Activated B cell treated with CpG ODN at 0.5 μM for 24 hours (primary cell): ENCODE measurements at regions of chr13 and their contacts with region 1.

Region 1: DNA sequence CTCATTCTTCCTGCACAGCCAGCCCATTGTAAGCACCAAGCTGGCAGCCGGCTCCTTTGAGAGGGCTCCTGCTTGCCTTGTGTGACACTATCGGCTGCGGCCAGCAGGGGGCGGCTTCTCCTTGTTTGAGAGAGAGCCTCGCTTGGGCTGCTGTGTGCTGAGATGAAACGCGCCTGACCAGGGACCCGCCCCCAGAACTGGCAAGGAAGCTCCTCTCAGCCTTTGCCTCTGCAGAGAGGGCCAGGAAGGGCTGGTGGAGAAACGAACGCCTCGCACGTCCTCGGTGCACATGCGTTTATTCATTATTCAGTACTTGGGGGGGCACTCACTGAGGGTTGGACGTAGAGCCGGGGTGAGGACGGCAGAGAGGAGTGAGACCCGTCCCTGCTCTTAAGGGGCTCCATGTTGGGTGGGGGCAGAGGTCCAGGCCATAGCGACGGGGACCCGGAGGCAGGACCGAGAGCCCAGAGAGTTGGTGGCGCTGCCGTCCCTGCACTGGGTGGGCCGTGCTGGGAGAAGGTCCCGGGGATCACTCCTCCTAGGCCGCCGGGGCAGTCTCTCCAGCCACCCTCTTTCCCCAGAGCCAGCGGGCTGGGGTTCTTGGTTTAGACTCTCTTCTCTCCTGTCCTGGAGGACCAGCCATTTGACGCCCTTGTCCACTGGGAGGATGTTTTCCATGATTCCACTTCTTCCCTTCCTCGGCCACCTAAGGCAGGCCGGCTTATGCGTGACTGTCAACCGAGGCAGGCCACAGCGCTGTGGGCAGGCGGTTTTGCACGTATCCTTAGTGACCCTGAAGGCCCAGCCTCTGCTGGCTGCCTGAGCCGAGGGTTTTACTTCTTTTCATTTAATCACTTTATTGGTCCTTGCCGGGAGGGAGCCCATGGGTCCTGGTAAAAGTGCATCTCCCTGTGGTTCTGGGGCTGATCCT is 174.5 kb downstream of the KATNAL1 start:
- DNase-seq: peak; percentile 90
- ATAC-seq: peak; percentile 100
- H3K4me3 Mint-ChIP-seq: no peak overlapping the region
- H3K27ac Mint-ChIP-seq: no peak overlapping the region
- H3K4me1 Mint-ChIP-seq: peaks cover 3% of the 10 kb centered on the region
- H3K27me3 Mint-ChIP-seq: no peaks in the 10 kb centered on the region
- CTCF ChIP-seq: peak; percentile 69

Region 2: GRCh38 chr13:30234619-30235162 is 101.8 kb after region 1 on chr13:
- CTCF ChIA-PET with region 1: no interaction called
- POLR2A ChIA-PET with region 1: no interaction called
- intact Hi-C with region 1: loop called (anchors 5 kb)
- DNase-seq: no peak
- ATAC-seq: no peak
- H3K4me3 Mint-ChIP-seq: no peak overlapping the region
- H3K27ac Mint-ChIP-seq: no peak overlapping the region
- H3K4me1 Mint-ChIP-seq: no peaks in the 10 kb centered on the region
- H3K27me3 Mint-ChIP-seq: no peaks in the 10 kb centered on the region
- CTCF ChIP-seq: no peak

Region 3: GRCh38 chr13:30371649-30372265 is 238.9 kb after region 1 on chr13:
- CTCF ChIA-PET with region 1: interaction called, 14 read pairs
- POLR2A ChIA-PET with region 1: interaction called, 4 read pairs
- intact Hi-C with region 1: loop called (anchors 1 kb)
- DNase-seq: peak; percentile 68
- ATAC-seq: peak; percentile 78
- H3K4me3 Mint-ChIP-seq: peak overlapping the region; percentile 78
- H3K27ac Mint-ChIP-seq: peak overlapping the region; percentile 84
- H3K4me1 Mint-ChIP-seq: peaks cover 85% of the 10 kb centered on the region
- H3K27me3 Mint-ChIP-seq: no peaks in the 10 kb centered on the region
- CTCF ChIP-seq: no peak

Region 4: DNA sequence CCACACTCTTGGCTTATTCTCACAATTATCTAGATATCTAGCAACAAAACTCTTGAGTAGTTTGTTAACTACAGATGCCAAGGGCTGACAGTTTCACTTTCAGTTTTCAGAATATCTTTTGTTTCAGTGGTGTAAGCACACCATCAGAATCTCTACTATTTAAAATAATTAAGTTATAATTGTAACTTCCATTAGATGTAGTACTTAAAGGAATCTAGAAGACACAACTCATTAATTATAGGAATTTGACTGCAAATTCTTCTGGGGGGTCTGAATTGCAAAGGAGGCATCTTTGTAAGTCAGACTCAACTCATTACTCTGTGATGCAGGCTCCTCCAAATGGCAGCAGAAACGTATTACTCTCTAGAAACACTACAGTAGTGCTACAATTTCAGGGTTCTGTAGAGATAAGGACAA is 440.0 kb after region 1 on chr13:
- CTCF ChIA-PET with region 1: interaction called, 7 read pairs
- POLR2A ChIA-PET with region 1: no interaction called
- intact Hi-C with region 1: loop called (anchors 2 kb)
- DNase-seq: no peak
- ATAC-seq: peak; percentile 83
- H3K4me3 Mint-ChIP-seq: peak overlapping the region; percentile 64
- H3K27ac Mint-ChIP-seq: peak overlapping the region; percentile 71
- H3K4me1 Mint-ChIP-seq: peaks cover 23% of the 10 kb centered on the region
- H3K27me3 Mint-ChIP-seq: no peaks in the 10 kb centered on the region
- CTCF ChIP-seq: no peak

Region 5: GRCh38 chr13:30679483-30680330 is 546.8 kb after region 1 on chr13:
- CTCF ChIA-PET with region 1: no interaction called
- POLR2A ChIA-PET with region 1: no interaction called
- intact Hi-C with region 1: loop called (anchors 1 kb)
- DNase-seq: no peak
- ATAC-seq: peak; percentile 96
- H3K4me3 Mint-ChIP-seq: no peak overlapping the region
- H3K27ac Mint-ChIP-seq: peak overlapping the region; percentile 20
- H3K4me1 Mint-ChIP-seq: peaks cover 15% of the 10 kb centered on the region
- H3K27me3 Mint-ChIP-seq: no peaks in the 10 kb centered on the region
- CTCF ChIP-seq: no peak

Region 6: DNA sequence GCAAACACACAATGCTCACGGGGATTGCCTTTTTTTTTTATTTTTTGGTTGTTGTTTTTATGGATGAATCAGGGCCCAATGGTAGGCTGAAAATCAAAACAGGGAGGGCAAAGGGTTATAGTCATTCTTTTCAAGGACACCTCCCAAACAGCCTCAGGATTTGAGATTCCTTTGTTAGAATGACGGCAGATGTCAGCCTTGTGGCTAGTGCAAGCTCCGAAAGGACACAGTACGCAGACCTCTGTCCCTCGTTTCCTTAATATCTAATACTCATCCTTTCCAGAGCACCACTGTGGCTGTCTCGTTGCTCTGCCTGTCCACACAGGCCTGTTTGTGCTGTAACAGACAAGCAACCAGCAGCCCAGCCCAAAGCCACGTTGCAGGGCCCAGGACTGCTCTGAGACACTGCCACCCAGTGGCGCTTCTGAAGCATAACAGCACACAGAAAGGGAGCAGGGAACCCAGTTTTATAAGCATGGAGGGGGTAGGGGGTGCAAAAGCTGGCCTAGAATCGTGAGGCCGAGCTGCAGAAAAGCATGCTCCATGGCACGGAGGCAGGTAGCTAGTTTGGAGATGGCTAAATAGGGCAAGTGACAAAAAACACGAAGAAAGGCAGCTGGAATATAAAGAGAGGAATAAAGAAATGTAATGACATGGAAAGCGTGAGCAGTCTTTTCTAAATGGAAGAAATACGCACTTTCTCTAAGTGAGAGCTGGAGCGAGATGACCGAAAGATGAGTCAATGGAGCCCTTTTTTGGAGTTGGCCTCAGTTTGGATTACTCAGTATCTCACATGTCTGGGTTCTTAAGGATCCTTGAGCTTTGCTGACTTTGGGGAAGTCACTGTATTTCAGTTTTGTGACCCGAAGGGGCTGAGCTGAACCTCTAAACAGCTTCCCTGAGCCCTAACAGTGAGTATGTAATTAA is 732.5 kb after region 1 on chr13:
- CTCF ChIA-PET with region 1: interaction called, 10 read pairs
- POLR2A ChIA-PET with region 1: no interaction called
- intact Hi-C with region 1: loop called (anchors 1 kb)
- DNase-seq: peak; percentile 29
- ATAC-seq: peak; percentile 96
- H3K4me3 Mint-ChIP-seq: no peak overlapping the region
- H3K27ac Mint-ChIP-seq: no peak overlapping the region
- H3K4me1 Mint-ChIP-seq: peaks cover 1% of the 10 kb centered on the region
- H3K27me3 Mint-ChIP-seq: peaks cover 13% of the 10 kb centered on the region
- CTCF ChIP-seq: peak; percentile 66